ENCODE measurements at regions of chr1 and their contacts with region 1.

Region 1: GRCh38 chr1:236685917-236686814 is at the start of gene ACTN2:
- DNase-seq: peak; percentile 54 to 77
- ATAC-seq: peak; percentile 22 to 81 (median 58)
- H3K4me3 ChIP-seq: peak within 1 kb of the TSS; percentile 42 to 74 (median 64)
- H3K27ac ChIP-seq: peak within 1 kb of the TSS; percentile 87 to 99 (median 95)
- H3K4me1 ChIP-seq: peaks cover 0 to 15% (median 4%) of the 10 kb centered on the region in 9 donors
- H3K27me3 ChIP-seq: peaks cover 0 to 45% (median 6%) of the 10 kb centered on the region in 7 donors
- CTCF ChIP-seq: no peak
- total RNA-seq, gene ACTN2: 2,366 to 4,290 (median 3,682) TPM

Region 2: DNA sequence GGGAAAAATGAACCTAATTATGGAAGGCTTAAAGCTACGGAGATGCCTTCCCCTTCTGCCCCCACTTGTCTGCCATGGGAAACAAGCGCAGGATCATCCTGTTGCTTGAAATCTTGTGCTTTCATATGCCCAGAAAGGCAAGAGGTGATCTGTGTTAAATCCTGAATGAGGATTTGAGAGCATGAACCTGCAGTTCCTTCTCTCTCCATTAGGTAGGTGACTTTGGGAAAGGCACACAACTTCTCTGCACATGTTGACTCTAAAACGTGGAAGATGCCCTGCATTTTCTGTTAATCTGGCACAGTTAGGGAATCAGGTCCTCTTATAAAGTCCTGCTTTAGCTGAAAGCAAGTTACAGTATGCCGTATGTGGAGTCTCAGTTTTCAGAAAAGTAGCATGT is 62.3 kb after region 1 on chr1:
- intact Hi-C with region 1: loop called in 1 of 10 experiments (anchors 5 kb)
- DNase-seq: no peak
- ATAC-seq: no peak
- H3K4me3 ChIP-seq: no peak overlapping the region
- H3K27ac ChIP-seq: peak overlapping the region in 9 of 10 donors; percentile 58 to 90 (median 78)
- H3K4me1 ChIP-seq: peaks cover 6 to 72% (median 23%) of the 10 kb centered on the region in 9 donors
- H3K27me3 ChIP-seq: no peaks in the 10 kb centered on the region
- CTCF ChIP-seq: peak in 1 of 9 donors; percentile 25

Region 3: GRCh38 chr1:236888903-236889302 is 202.7 kb after region 1 on chr1:
- intact Hi-C with region 1: no loop called
- DNase-seq: peak; percentile 67 to 71
- ATAC-seq: peak; percentile 50 to 78 (median 66)
- H3K4me3 ChIP-seq: no peak overlapping the region
- H3K27ac ChIP-seq: peak overlapping the region in 9 of 10 donors; percentile 72 to 92 (median 87)
- H3K4me1 ChIP-seq: peaks cover 4 to 71% (median 19%) of the 10 kb centered on the region in 9 donors
- H3K27me3 ChIP-seq: no peaks in the 10 kb centered on the region
- CTCF ChIP-seq: no peak

Region 4: GRCh38 chr1:236930503-236930902 is 244.3 kb after region 1 on chr1:
- intact Hi-C with region 1: no loop called
- DNase-seq: no peak
- ATAC-seq: peak in 1 of 8 donors; percentile 57
- H3K4me3 ChIP-seq: no peak overlapping the region
- H3K27ac ChIP-seq: no peak overlapping the region
- H3K4me1 ChIP-seq: no peaks in the 10 kb centered on the region
- H3K27me3 ChIP-seq: no peaks in the 10 kb centered on the region
- CTCF ChIP-seq: no peak

Region 5: GRCh38 chr1:236952246-236953003 is 266.3 kb after region 1 on chr1:
- intact Hi-C with region 1: no loop called
- DNase-seq: no peak
- ATAC-seq: peak in 3 of 8 donors; percentile 38 to 57 (median 52)
- H3K4me3 ChIP-seq: peak overlapping the region in 2 of 10 donors; percentile 11 to 15
- H3K27ac ChIP-seq: peak overlapping the region in 1 of 10 donors; percentile 22
- H3K4me1 ChIP-seq: peaks cover 0 to 21% (median 6%) of the 10 kb centered on the region in 9 donors
- H3K27me3 ChIP-seq: no peaks in the 10 kb centered on the region
- CTCF ChIP-seq: no peak